ENCODE measurements at regions of chr1 and their contacts with region 1.

Region 1: DNA sequence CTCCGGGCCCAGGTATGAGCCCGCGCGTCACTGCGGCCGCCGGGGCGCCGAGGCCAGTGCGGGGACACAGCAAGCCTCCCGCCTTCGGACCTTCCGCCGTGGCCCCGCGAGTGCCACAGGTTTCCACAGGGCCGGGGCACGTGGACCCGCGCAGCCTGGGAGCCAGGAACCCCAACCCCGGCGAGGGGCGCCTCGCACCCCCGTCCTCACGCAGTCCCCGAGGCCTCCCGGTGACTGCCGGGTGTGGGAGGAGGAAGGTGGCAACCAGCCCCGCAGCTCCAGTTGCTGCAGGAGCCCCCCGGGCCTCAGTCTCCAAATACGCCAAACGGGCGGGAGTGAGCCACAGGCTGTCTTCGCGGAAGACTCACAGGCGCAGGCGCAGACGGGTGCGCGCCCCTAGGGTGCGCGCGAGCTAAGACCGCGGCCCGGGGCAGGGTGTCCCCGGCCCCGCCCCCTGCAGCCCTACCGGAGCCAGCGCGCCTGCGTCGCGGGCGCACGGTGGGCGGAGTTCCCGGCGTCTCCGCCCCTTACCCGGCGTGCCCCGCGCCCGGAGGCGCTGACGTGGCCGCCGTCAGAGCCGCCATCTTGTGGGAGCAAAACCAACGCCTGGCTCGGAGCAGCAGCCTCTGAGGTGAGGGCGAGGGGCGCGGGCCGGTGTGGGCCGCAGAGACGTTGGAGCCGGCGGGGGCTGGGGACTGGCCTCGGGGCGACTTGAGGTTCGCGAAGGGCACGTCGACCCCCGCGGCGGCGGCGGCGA is at the start of gene ARF1:
- DNase-seq: peak; percentile 93
- H3K4me3 Mint-ChIP-seq: peak within 1 kb of the TSS; percentile 91
- H3K27ac Mint-ChIP-seq: peak within 1 kb of the TSS; percentile 96
- H3K4me1 Mint-ChIP-seq: peaks cover 37% of the 10 kb centered on the region
- H3K27me3 Mint-ChIP-seq: no peaks in the 10 kb centered on the region
- total RNA-seq, gene ARF1: 346 to 355 TPM

Region 2: GRCh38 chr1:227787513-227788270 is 294.6 kb before region 1 on chr1:
- CTCF ChIA-PET with region 1: no interaction called
- POLR2A ChIA-PET with region 1: no interaction called
- intact Hi-C with region 1: loop called (anchors 5 kb)
- DNase-seq: peak; percentile 97
- H3K4me3 Mint-ChIP-seq: peak overlapping the region; percentile 68
- H3K27ac Mint-ChIP-seq: no peak overlapping the region
- H3K4me1 Mint-ChIP-seq: peaks cover 11% of the 10 kb centered on the region
- H3K27me3 Mint-ChIP-seq: no peaks in the 10 kb centered on the region

Region 3: GRCh38 chr1:228102791-228103620 is 20.7 kb after region 1 on chr1 and contains the start of gene C1orf35:
- CTCF ChIA-PET with region 1: interaction called, 5 read pairs
- POLR2A ChIA-PET with region 1: interaction called, 3 read pairs
- intact Hi-C with region 1: loop called (anchors 1 kb)
- DNase-seq: peak; percentile 96
- H3K4me3 Mint-ChIP-seq: peak within 1 kb of the TSS; percentile 91
- H3K27ac Mint-ChIP-seq: peak within 1 kb of the TSS; percentile 88
- H3K4me1 Mint-ChIP-seq: peaks cover 28% of the 10 kb centered on the region
- H3K27me3 Mint-ChIP-seq: no peaks in the 10 kb centered on the region
- total RNA-seq, gene C1orf35: 21.9 to 22.1 TPM

Region 4: GRCh38 chr1:228109073-228109961 is 27.0 kb after region 1 on chr1 and contains the start of gene MRPL55:
- CTCF ChIA-PET with region 1: no interaction called
- POLR2A ChIA-PET with region 1: interaction called, 4 read pairs
- intact Hi-C with region 1: loop called (anchors 1 kb)
- DNase-seq: peak; percentile 99
- H3K4me3 Mint-ChIP-seq: peak within 1 kb of the TSS; percentile 89
- H3K27ac Mint-ChIP-seq: peak within 1 kb of the TSS; percentile 84
- H3K4me1 Mint-ChIP-seq: peaks cover 25% of the 10 kb centered on the region
- H3K27me3 Mint-ChIP-seq: no peaks in the 10 kb centered on the region
- total RNA-seq, gene MRPL55: 51.1 to 52.7 TPM

Region 5: GRCh38 chr1:228139944-228140656 is 57.8 kb after region 1 on chr1 and contains the start of gene GUK1:
- CTCF ChIA-PET with region 1: no interaction called
- POLR2A ChIA-PET with region 1: interaction called, 5 read pairs
- intact Hi-C with region 1: loop called (anchors 1 kb)
- DNase-seq: peak; percentile 100
- H3K4me3 Mint-ChIP-seq: peak within 1 kb of the TSS; percentile 99
- H3K27ac Mint-ChIP-seq: peak within 1 kb of the TSS; percentile 96
- H3K4me1 Mint-ChIP-seq: peaks cover 27% of the 10 kb centered on the region
- H3K27me3 Mint-ChIP-seq: peaks cover 2% of the 10 kb centered on the region
- total RNA-seq, gene GUK1: 229 to 239 TPM

Region 6: DNA sequence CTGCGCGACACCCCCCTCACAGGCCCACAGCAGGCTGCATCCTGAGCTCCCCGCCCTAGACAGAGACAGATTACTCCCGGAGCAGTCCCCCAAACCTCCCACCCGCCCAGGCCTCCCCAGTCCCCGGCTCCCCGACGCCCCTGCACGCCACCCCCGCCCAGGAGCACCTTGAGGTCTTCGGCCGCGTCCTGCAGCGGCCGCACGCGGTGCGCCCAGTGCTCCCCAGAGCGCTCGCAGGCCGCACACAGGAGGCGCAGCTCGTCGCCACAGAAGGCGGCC is 323.6 kb after region 1 on chr1:
- CTCF ChIA-PET with region 1: no interaction called
- POLR2A ChIA-PET with region 1: no interaction called
- intact Hi-C with region 1: loop called (anchors 1 kb)
- DNase-seq: no peak
- H3K4me3 Mint-ChIP-seq: peak overlapping the region; percentile 83
- H3K27ac Mint-ChIP-seq: peak overlapping the region; percentile 71
- H3K4me1 Mint-ChIP-seq: peaks cover 43% of the 10 kb centered on the region
- H3K27me3 Mint-ChIP-seq: no peaks in the 10 kb centered on the region

Region 7: DNA sequence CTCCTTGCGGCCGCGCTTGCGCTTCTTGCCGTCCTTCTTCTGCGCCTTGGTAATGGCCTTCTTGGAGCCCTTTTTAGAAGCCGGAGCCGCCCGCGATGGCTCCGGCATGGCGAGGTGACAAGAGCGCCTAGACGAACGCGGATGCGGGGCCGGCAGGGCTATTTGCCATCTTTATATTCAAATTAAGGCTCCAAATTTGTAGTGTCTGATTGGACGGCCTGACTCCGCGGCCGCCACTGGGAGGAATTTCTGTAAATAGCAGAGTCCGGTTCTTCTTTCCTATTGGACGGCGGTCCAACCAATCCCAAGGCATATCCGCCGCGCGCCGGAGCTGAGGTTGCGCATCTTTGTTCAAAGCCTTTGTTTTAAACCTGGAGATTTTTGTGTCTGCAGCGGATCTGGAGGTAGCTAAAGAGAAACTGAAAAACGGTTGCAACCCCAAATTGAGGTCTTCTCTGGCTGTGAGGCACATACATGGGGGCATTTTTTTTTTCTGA is 382.2 kb after region 1 on chr1:
- CTCF ChIA-PET with region 1: no interaction called
- POLR2A ChIA-PET with region 1: interaction called, 3 read pairs
- intact Hi-C with region 1: loop called (anchors 2 kb)
- DNase-seq: peak; percentile 96
- H3K4me3 Mint-ChIP-seq: peak overlapping the region; percentile 87
- H3K27ac Mint-ChIP-seq: peak overlapping the region; percentile 96
- H3K4me1 Mint-ChIP-seq: peaks cover 46% of the 10 kb centered on the region
- H3K27me3 Mint-ChIP-seq: no peaks in the 10 kb centered on the region